ENCODE measurements at regions of chr1 and their contacts with region 1.

Region 1: DNA sequence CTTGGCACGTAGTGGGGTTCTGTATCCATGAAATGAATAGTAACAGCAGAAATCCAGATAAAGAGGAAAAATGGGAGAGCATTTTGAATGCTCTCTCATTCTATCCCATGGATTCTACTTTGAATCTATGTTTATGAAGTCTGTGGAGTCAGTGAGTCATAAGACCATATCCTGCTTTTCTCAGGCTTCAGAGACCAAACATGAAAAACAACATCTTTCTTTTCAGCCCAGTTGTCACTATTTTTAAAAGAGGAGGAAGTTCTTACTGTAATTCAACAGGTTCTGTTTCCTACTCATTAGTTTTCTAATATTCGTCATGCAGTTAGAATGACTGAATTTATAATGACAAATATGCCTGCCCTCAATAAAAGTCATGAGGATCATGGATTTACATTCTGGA is 39.4 kb upstream of the CD55 start:
- DNase-seq: peak; percentile 96
- H3K4me3 ChIP-seq: peak overlapping the region in 1 of 3 experiments; percentile 36
- H3K27ac ChIP-seq: peak overlapping the region; percentile 97
- H3K4me1 ChIP-seq: peaks cover 44% of the 10 kb centered on the region
- H3K27me3 ChIP-seq: no peaks in the 10 kb centered on the region
- CTCF ChIP-seq: no peak
- POLR2A ChIP-seq: no peak

Region 2: DNA sequence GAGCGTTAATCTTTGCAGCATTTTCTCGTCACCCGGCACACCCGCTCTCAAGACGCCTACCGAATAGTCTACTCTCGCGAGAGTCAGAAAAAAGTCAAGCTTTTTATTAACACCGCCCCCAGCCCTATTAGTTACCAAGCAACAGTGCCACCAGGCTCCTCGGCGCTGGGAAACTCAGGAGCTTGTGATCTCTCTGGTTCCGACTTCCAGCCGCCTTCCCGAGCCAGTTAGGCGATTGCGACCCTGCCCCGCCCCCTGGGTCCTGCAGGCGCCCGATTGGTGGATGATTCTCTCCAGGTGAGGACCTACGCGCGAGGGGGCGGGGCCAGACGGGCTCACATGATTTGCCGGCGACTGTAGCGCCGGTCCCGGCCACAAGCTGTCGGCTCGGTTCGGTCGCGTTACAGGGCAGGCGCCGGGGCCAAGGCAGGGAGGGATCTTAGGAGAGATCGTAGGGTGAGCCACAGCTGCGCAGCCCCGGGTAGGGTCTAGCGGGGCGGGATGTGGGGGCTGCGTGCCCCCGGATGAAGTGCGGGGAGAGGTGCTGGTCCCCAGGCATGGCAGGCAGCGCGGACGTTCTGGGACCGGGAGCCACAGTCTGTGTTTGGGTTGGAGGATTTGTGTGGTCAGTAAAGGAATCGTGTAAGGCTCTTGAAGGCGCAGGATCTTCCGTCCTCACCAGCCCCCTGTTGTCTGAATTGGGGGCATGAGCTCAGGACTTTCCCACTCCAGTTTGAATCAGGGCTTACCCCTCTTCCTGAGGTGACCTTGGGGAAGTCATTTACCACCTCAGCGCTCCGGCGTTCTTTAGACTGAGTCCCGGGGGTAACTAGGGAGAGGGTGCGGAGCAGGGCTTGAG is 228.9 kb before region 1 on chr1 and contains the start of gene PFKFB2:
- CTCF ChIA-PET with region 1: no interaction called
- POLR2A ChIA-PET with region 1: no interaction called
- dilution Hi-C with region 1: no loop called
- intact Hi-C with region 1: loop called (anchors 2 kb)
- DNase-seq: peak; percentile 88
- H3K4me3 ChIP-seq: peak within 1 kb of the TSS; percentile 27 to 77 (median 62)
- H3K27ac ChIP-seq: no peak within 1 kb of the TSS
- H3K4me1 ChIP-seq: peaks cover 15% of the 10 kb centered on the region
- H3K27me3 ChIP-seq: peaks cover 0 to 2% of the 10 kb centered on the region in 2 experiments
- CTCF ChIP-seq: no peak
- POLR2A ChIP-seq: no peak
- total RNA-seq, gene PFKFB2: 1.8 and 2.0 TPM in 2 replicates

Region 3: GRCh38 chr1:207259391-207259790 is 22.7 kb before region 1 on chr1:
- CTCF ChIA-PET with region 1: interaction called, 14 read pairs
- POLR2A ChIA-PET with region 1: no interaction called
- dilution Hi-C with region 1: no loop called
- intact Hi-C with region 1: loop called (anchors 1 kb)
- DNase-seq: peak; percentile 78
- H3K4me3 ChIP-seq: no peak overlapping the region
- H3K27ac ChIP-seq: no peak overlapping the region
- H3K4me1 ChIP-seq: no peaks in the 10 kb centered on the region
- H3K27me3 ChIP-seq: no peaks in the 10 kb centered on the region
- CTCF ChIP-seq: peak; percentile 46 to 67
- POLR2A ChIP-seq: no peak

Region 4: DNA sequence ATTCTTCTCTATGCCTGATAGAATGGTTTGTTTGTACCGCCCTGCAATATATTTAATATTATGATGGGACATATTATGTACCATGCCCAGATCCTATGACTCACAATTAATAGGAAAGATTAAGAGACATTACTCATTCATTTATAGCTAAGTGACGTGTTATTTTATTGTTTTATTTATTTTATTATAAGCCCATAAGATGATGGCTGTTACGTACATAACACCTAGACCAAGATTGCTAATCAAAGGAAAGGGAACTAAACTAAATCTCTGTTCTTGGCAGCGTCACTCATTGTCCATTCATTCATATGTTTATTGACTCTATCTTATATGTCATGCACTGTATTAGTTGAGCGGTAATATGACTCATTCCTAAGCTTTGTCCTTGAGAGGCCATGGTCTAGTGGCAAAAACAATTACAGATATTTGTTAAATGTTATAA is 22.7 kb after region 1 on chr1:
- CTCF ChIA-PET with region 1: interaction called, 6 read pairs
- POLR2A ChIA-PET with region 1: interaction called, 3 read pairs
- dilution Hi-C with region 1: no loop called
- intact Hi-C with region 1: loop called (anchors 1 kb)
- DNase-seq: peak; percentile 97
- H3K4me3 ChIP-seq: no peak overlapping the region
- H3K27ac ChIP-seq: peak overlapping the region; percentile 91
- H3K4me1 ChIP-seq: peaks cover 37% of the 10 kb centered on the region
- H3K27me3 ChIP-seq: no peaks in the 10 kb centered on the region
- CTCF ChIP-seq: no peak
- POLR2A ChIP-seq: no peak

Region 5: DNA sequence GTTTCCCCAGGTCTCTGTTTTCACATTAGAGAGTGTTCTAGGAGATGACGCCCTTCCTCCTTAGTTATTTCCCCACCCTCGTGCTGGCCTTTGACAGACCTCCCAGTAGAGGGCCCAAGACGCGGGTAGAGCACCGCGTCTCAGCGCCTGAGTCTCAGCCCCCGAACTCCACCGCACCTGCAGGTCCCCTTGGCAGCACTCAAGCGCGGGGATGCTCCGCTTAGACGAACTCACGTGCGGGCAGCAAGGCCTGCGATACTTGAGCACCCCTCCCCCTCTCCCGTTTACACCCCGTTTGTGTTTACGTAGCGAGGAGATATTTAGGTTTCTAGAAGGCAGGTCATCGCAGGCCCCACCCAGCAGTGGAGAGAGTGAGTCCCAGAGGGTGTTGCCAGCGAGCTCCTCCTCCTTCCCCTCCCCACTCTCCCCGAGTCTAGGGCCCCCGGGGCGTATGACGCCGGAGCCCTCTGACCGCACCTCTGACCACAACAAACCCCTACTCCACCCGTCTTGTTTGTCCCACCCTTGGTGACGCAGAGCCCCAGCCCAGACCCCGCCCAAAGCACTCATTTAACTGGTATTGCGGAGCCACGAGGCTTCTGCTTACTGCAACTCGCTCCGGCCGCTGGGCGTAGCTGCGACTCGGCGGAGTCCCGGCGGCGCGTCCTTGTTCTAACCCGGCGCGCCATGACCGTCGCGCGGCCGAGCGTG is 39.2 kb after region 1 on chr1 and contains the start of gene CD55:
- CTCF ChIA-PET with region 1: interaction called, 7 read pairs
- POLR2A ChIA-PET with region 1: interaction called, 13 read pairs
- dilution Hi-C with region 1: no loop called
- intact Hi-C with region 1: loop called (anchors 1 kb)
- DNase-seq: peak; percentile 98
- H3K4me3 ChIP-seq: peak within 1 kb of the TSS; percentile 74 to 94 (median 87)
- H3K27ac ChIP-seq: peak within 1 kb of the TSS; percentile 92
- H3K4me1 ChIP-seq: peaks cover 17% of the 10 kb centered on the region
- H3K27me3 ChIP-seq: no peaks in the 10 kb centered on the region
- CTCF ChIP-seq: peak; percentile 35 to 43
- POLR2A ChIP-seq: peak; percentile 77
- total RNA-seq, gene CD55: 179 and 223 TPM in 2 replicates

Region 6: DNA sequence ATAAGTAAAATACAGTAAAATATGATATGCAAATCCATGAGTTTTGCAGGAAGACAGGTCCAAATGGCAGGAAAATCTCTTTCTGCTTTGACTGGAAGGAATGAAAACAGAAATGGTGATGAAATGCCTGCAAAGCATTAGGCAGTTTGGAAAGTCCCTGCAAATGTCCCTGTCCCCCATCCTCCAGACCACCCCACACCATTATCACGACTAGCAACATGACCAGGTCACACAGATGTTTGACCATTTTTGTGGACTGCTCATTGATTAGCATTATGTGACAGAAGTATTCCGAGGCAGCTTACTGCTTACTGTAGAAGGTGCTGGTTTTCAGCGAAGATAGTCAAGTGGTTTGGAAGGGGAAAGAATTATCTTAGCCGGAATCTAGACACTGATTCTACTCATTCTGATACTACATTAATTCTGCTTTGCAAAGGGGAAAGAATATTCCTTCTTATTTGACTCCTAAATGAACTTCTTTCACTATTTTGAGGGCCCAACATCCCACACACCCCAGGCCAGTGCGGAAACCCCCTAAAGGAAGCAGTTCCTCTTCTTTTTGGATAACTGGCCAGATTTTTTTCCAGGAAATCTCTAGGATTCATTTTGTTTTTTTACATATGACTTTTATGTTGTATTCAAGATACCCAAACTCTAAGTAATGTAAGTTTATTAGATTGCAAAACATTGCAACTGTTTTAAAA is 162.6 kb after region 1 on chr1:
- CTCF ChIA-PET with region 1: no interaction called
- POLR2A ChIA-PET with region 1: no interaction called
- dilution Hi-C with region 1: no loop called
- intact Hi-C with region 1: no loop called
- DNase-seq: no peak
- H3K4me3 ChIP-seq: no peak overlapping the region
- H3K27ac ChIP-seq: no peak overlapping the region
- H3K4me1 ChIP-seq: no peaks in the 10 kb centered on the region
- H3K27me3 ChIP-seq: peaks cover 9 to 24% of the 10 kb centered on the region in 2 experiments
- CTCF ChIP-seq: no peak
- POLR2A ChIP-seq: no peak

Region 7: GRCh38 chr1:207751790-207752455 is 469.9 kb after region 1 on chr1 and contains the start of gene CD46:
- CTCF ChIA-PET with region 1: no interaction called
- POLR2A ChIA-PET with region 1: no interaction called
- dilution Hi-C with region 1: no loop called
- intact Hi-C with region 1: loop called (anchors 10 kb)
- DNase-seq: peak; percentile 95
- H3K4me3 ChIP-seq: peak within 1 kb of the TSS; percentile 37 to 86 (median 56)
- H3K27ac ChIP-seq: peak within 1 kb of the TSS; percentile 85
- H3K4me1 ChIP-seq: peaks cover 30% of the 10 kb centered on the region
- H3K27me3 ChIP-seq: no peaks in the 10 kb centered on the region
- CTCF ChIP-seq: no peak
- POLR2A ChIP-seq: peak; percentile 83
- total RNA-seq, gene CD46: 243 and 256 TPM in 2 replicates